ENCODE measurements at regions of chr21 and their contacts with region 1.

Region 1: DNA sequence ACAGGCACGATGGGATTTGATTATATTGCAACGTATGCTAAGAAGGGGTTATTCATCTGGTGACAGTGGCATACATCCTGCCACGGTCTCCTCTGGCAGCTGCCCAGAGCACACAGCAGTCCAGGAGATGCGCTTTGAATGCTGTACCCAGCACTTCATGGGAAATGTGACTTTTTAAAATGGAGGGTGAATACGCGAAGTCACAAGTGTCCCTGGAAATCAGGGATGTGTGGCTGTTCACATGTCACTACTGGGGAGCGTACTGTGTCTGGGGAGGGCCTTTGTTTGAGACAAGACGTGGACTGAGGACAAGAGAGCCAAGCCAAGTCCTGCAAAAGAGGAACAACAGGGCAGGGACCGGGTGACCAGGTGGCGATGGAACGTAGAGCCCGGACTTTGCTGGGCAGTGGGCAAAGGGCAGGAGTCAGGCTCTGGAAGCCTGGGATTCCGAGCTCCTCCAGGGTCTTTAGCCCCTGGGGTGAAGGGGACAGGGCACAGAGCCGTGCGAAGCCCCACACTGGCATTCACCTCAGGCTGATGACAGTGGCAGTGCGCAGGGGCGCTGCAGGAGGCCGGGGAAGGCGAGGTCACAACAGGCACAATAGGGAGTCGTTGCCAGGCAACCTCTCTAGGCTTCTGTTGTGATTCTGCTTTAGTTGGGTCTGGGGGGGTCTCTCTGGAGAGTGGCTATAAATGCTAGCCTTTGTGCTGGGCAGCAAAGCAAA is 11.4 kb upstream of the ZBTB21 start:
- DNase-seq: no peak
- ATAC-seq: no peak
- H3K4me3 ChIP-seq: no peak overlapping the region
- H3K27ac ChIP-seq: no peak overlapping the region
- H3K4me1 ChIP-seq: peaks cover 0 to 6% of the 10 kb centered on the region in 2 experiments; a peak in 1 of 5 replicates
- H3K27me3 ChIP-seq: peaks cover 78 to 82% of the 10 kb centered on the region in 2 experiments
- CTCF ChIP-seq: no peak
- EP300 ChIP-seq: no peak
- POLR2A ChIP-seq: no peak
- RAD21 ChIP-seq: no peak

Region 2: GRCh38 chr21:42080788-42081083 is 59.2 kb after region 1 on chr21:
- CTCF ChIA-PET with region 1: no interaction called
- POLR2A ChIA-PET with region 1: no interaction called
- in situ Hi-C with region 1: no loop called
- intact Hi-C with region 1: loop called (anchors 10 kb)
- DNase-seq: no peak
- ATAC-seq: no peak
- H3K4me3 ChIP-seq: no peak overlapping the region
- H3K27ac ChIP-seq: no peak overlapping the region
- H3K4me1 ChIP-seq: peaks cover 3 to 4% of the 10 kb centered on the region in 2 experiments; a peak in 4 of 5 replicates
- H3K27me3 ChIP-seq: peaks cover 62 to 88% of the 10 kb centered on the region in 2 experiments
- CTCF ChIP-seq: no peak
- EP300 ChIP-seq: no peak
- POLR2A ChIP-seq: no peak
- RAD21 ChIP-seq: no peak

Measured in K562 (cell line).